Heart left ventricle (tissue), 16 donors: ENCODE measurements at regions of chr18 and their contacts with region 1.

Region 1: GRCh38 chr18:53698907-53699306 is 525.6 kb downstream of the MBD2 start:
- DNase-seq: peak in 4 of 5 donors; percentile 22 to 34 (median 28)
- ATAC-seq: peak; percentile 47 to 80 (median 70)
- H3K4me3 ChIP-seq: no peak overlapping the region
- H3K27ac ChIP-seq: no peak overlapping the region
- H3K4me1 ChIP-seq: no peaks in the 10 kb centered on the region
- H3K27me3 ChIP-seq: no peaks in the 10 kb centered on the region
- CTCF ChIP-seq: peak; percentile 18 to 61 (median 42)
- POLR2A ChIP-seq: no peak

Region 2: GRCh38 chr18:53991202-53991601 is 292.3 kb after region 1 on chr18:
- intact Hi-C with region 1: no loop called
- DNase-seq: no peak
- ATAC-seq: no peak
- H3K4me3 ChIP-seq: no peak overlapping the region
- H3K27ac ChIP-seq: no peak overlapping the region
- H3K4me1 ChIP-seq: peaks cover 0 to 7% (median 0%) of the 10 kb centered on the region in 12 donors
- H3K27me3 ChIP-seq: no peaks in the 10 kb centered on the region
- CTCF ChIP-seq: no peak
- POLR2A ChIP-seq: no peak

Region 3: GRCh38 chr18:54043484-54044251 is 344.8 kb after region 1 on chr18:
- intact Hi-C with region 1: loop called in 2 of 10 experiments (anchors 5 to 10 kb)
- DNase-seq: no peak
- ATAC-seq: no peak
- H3K4me3 ChIP-seq: no peak overlapping the region
- H3K27ac ChIP-seq: no peak overlapping the region
- H3K4me1 ChIP-seq: peaks cover 0 to 8% (median 0%) of the 10 kb centered on the region in 12 donors
- H3K27me3 ChIP-seq: no peaks in the 10 kb centered on the region
- CTCF ChIP-seq: peak in 7 of 12 donors; percentile 12 to 37 (median 19)
- POLR2A ChIP-seq: no peak

Region 4: DNA sequence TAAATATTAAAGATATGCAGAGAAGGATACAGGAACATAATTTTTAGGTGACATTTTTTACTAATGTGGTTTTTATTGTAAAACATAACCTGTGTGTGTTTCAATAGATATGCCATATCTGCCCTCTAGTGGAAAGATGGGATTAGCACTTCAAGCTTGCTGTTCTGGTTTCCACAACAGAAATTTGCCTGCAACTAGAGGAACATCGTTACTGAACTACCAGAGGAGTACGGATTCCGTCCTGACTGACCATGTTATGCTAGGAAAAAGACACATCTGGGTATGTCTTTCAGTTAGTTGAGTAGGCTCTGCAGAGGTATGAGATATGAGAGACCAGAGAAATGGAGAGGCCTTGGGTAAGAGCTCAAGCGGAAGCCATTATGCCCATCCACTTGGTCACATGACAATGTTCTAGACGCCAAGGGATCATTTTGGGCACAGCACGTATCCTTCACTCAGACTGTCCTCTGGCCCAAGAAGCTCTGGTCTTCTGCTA is 420.7 kb after region 1 on chr18:
- intact Hi-C with region 1: loop called in 9 of 10 experiments (anchors 2 to 10 kb)
- DNase-seq: no peak
- ATAC-seq: peak; percentile 37 to 81 (median 62)
- H3K4me3 ChIP-seq: peak overlapping the region in 4 of 12 donors; percentile 4 to 33 (median 22)
- H3K27ac ChIP-seq: no peak overlapping the region
- H3K4me1 ChIP-seq: peaks cover 0 to 4% (median 0%) of the 10 kb centered on the region in 12 donors
- H3K27me3 ChIP-seq: no peaks in the 10 kb centered on the region
- CTCF ChIP-seq: peak; percentile 50 to 86 (median 74)
- POLR2A ChIP-seq: no peak

Region 5: DNA sequence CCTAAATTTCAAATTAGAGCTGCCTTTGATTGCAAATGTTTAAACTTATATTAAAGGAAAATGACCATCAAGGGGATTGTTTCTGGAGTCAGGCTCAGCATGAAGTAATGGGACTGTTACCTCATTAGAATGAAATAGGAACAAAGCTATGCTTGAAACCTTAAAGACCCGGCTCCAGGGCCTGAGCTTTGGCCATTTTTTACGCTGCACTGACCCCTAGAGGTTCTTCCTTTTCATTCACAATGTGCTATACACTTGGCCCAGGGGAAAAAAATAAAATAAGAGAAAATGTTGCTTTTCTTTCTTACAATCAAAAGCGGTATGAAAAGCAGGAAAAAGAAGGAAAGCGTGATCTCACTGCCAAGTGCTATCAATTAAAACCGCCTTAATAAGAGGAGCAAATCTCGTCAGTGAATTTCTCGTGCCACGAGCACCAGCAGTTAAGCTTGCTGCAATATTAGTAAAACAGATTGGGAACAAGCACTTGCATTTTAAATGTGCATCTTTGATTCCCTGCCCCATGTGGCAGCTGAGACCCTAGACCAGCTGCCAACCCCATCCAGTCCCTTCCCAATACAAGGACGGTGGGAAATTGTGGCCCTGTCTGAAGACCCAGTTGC is 429.0 kb after region 1 on chr18:
- intact Hi-C with region 1: loop called in 2 of 10 experiments (anchors 5 to 10 kb)
- DNase-seq: peak in 2 of 5 donors; percentile 11 to 21
- ATAC-seq: peak in 3 of 4 donors; percentile 60 to 76 (median 72)
- H3K4me3 ChIP-seq: no peak overlapping the region
- H3K27ac ChIP-seq: no peak overlapping the region
- H3K4me1 ChIP-seq: peaks cover 0 to 6% (median 0%) of the 10 kb centered on the region in 12 donors
- H3K27me3 ChIP-seq: no peaks in the 10 kb centered on the region
- CTCF ChIP-seq: peak; percentile 26 to 59 (median 45)
- POLR2A ChIP-seq: no peak